A673 (cell line): ENCODE measurements at regions of chr6 and their contacts with region 1.

Region 1: GRCh38 chr6:71190809-71191208 is 97.8 kb upstream of the OGFRL1 start:
- DNase-seq: peak; percentile 64
- H3K4me3 ChIP-seq: no peak overlapping the region
- H3K27ac ChIP-seq: no peak overlapping the region
- H3K4me1 ChIP-seq: no peaks in the 10 kb centered on the region
- H3K27me3 ChIP-seq: no peaks in the 10 kb centered on the region
- CTCF ChIP-seq: peak; percentile 61

Region 2: DNA sequence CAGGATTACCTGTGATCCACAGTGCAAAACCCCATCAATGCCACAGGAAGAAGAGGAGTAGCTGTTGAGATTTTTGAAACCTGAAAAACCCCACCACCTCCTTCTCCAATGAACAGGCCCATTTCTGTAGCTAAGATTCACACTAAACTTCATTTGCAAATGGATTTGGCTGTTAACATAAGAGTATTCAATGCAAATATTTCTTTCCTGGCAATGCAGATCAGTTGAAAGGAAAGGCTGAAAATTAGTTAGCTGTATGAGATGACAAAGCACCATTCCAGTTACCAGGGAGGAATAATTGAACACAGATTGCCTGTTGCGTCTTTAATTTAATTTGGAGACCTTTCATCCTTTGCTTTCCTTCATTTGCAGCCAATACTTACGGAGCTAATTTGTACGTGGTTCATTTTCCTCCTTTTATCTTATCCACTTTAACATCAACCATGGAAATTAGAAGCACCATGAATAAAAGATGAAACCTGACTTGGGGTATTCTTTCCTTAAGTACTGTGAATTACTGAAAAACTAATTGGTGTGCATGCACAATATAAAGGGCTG is 238.1 kb before region 1 on chr6:
- CTCF ChIA-PET with region 1: no interaction called
- POLR2A ChIA-PET with region 1: no interaction called
- intact Hi-C with region 1: no loop called
- DNase-seq: no peak
- H3K4me3 ChIP-seq: no peak overlapping the region
- H3K27ac ChIP-seq: no peak overlapping the region
- H3K4me1 ChIP-seq: no peaks in the 10 kb centered on the region
- H3K27me3 ChIP-seq: peaks cover 58% of the 10 kb centered on the region
- CTCF ChIP-seq: no peak

Region 3: GRCh38 chr6:71091173-71091572 is 99.6 kb before region 1 on chr6:
- CTCF ChIA-PET with region 1: no interaction called
- POLR2A ChIA-PET with region 1: no interaction called
- intact Hi-C with region 1: no loop called
- DNase-seq: no peak
- H3K4me3 ChIP-seq: no peak overlapping the region
- H3K27ac ChIP-seq: no peak overlapping the region
- H3K4me1 ChIP-seq: no peaks in the 10 kb centered on the region
- H3K27me3 ChIP-seq: peaks cover 6% of the 10 kb centered on the region
- CTCF ChIP-seq: no peak

Region 4: GRCh38 chr6:71349395-71349794 is 158.6 kb after region 1 on chr6:
- CTCF ChIA-PET with region 1: no interaction called
- POLR2A ChIA-PET with region 1: no interaction called
- intact Hi-C with region 1: loop called (anchors 1 kb)
- DNase-seq: peak; percentile 52
- H3K4me3 ChIP-seq: no peak overlapping the region
- H3K27ac ChIP-seq: no peak overlapping the region
- H3K4me1 ChIP-seq: no peaks in the 10 kb centered on the region
- H3K27me3 ChIP-seq: no peaks in the 10 kb centered on the region
- CTCF ChIP-seq: peak; percentile 72

Region 5: DNA sequence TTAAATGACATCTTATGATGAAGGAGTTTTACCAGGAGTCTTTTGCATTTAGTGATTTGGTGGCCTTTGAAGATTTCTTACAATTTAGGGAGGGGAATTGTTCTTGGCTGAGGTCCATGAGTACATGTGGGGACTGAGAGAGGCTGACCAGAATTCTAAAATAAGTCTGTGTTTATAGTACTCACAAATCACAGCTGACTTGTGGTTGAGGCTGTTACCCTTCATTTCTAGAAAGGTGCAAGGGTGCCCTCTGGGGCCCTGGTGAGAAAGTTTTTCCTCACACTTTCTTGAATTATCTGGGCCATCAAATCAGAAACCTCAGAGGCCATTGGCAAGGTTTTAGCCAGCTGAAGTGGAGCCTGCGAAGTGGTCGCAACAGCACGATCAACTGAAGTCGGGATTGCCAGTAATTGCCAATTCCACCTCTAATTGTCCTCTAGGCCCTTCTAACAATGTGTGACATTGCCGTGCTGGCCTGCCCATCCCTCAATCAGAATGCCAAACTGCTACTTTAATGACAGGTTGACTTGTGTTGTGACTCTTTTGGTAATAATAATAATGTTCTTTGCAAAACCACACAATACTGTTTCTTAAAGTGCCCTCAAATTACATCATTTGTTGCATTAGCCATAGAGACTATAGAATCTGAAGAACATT is 319.4 kb after region 1 on chr6:
- CTCF ChIA-PET with region 1: no interaction called
- POLR2A ChIA-PET with region 1: no interaction called
- intact Hi-C with region 1: loop called (anchors 5 kb)
- DNase-seq: peak; percentile 61
- H3K4me3 ChIP-seq: no peak overlapping the region
- H3K27ac ChIP-seq: no peak overlapping the region
- H3K4me1 ChIP-seq: no peaks in the 10 kb centered on the region
- H3K27me3 ChIP-seq: no peaks in the 10 kb centered on the region
- CTCF ChIP-seq: peak; percentile 50; the same call in 1 of the 2 replicates